Pancreas (tissue), 10 donors: ENCODE measurements at regions of chr2 and their contacts with region 1.

Region 1: GRCh38 chr2:112749755-112750559 is 14.5 kb downstream of the CKAP2L start:
- DNase-seq: peak; percentile 49 to 89 (median 74)
- ATAC-seq: peak; percentile 61 to 97 (median 86)
- H3K4me3 ChIP-seq: no peak overlapping the region
- H3K27ac ChIP-seq: no peak overlapping the region
- H3K4me1 ChIP-seq: peaks cover 0 to 4% (median 0%) of the 10 kb centered on the region in 3 donors
- H3K27me3 ChIP-seq: no peaks in the 10 kb centered on the region
- CTCF ChIP-seq: peak; percentile 69 to 93 (median 74)

Region 2: DNA sequence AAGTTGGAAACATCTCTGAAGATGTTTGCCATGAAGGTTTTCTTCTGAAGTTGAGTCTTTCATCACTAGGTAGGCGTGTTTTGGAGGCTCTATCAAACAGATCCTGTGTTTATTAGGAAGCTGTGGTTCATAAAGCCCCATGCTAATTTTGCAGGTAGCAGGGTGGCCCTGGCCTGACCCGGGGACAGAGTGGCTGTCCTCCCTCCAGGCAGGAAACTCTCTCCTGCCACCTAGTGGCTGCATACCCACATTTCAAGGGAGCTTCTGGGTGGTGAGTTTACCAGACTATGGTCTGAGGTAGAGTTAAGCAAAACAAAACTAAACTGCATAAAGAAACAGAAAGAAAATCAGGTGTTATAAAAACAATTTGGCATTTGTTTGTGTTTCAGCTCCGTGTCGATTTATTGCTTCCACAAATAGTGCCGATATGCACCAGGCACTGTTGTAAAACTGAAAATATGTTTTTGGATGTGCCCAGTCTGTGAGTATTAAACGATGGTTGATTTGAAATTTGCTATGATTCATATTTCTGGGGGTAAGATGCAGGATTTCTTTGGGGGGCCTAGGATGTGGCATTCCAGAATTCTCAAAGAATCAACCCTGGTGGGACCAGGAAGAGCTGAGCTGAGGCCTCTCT is 135.0 kb after region 1 on chr2:
- intact Hi-C with region 1: loop called in 1 of 3 experiments (anchors 5 kb)
- DNase-seq: peak in 5 of 6 donors; percentile 32 to 79 (median 63)
- ATAC-seq: peak; percentile 74 to 96 (median 88)
- H3K4me3 ChIP-seq: no peak overlapping the region
- H3K27ac ChIP-seq: no peak overlapping the region
- H3K4me1 ChIP-seq: no peaks in the 10 kb centered on the region
- H3K27me3 ChIP-seq: no peaks in the 10 kb centered on the region
- CTCF ChIP-seq: peak; percentile 59 to 80 (median 73)

Region 3: DNA sequence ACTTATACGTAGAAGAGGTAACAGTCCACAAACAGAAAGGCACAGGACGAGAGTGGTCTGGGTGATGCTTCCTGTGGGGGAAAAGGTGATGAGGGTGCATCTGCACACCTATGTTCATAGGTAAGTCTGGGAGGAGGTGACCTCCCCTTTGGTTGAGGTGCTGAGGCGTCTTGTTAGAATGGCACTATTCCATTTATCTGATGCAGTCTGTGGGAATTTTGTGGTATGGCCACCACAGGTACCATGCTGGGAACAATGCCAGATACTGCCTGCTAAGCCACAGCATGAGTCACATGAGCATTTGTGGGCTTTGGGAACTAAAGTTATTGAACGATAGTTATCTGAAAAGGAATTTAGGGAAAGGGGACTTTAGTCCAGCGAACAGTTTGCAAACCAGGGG is 188.9 kb after region 1 on chr2:
- intact Hi-C with region 1: loop called in 1 of 3 experiments (anchors 10 kb)
- DNase-seq: no peak
- ATAC-seq: no peak
- H3K4me3 ChIP-seq: no peak overlapping the region
- H3K27ac ChIP-seq: no peak overlapping the region
- H3K4me1 ChIP-seq: no peaks in the 10 kb centered on the region
- H3K27me3 ChIP-seq: no peaks in the 10 kb centered on the region
- CTCF ChIP-seq: no peak